ENCODE measurements at regions of chr15 and their contacts with region 1.

Region 1: GRCh38 chr15:48877630-48878595 is at the start of gene EID1:
- DNase-seq: peak; percentile 89
- H3K4me3 ChIP-seq: peak within 1 kb of the TSS; percentile 93
- CTCF ChIP-seq: no peak

Region 2: DNA sequence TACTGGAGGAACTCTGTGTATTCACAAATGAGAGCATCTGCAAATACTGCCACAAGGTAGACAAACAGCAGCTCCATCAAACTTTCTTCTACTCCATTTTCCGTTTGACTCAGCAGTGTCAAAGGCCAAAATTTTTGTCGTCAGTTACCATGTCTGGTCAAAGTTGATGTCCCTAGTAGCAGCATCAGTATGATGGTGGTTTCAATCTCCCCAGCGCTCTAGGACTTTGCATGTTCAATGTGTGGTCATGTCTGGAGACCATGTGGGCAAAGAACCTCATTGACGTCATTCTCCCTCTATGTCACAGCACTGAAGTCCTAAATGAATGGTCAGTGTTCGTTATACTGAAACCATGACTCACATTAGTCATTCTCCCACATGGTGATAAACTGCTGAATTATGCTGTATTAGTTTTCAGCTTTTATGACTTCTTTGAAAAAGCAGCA is 62.6 kb after region 1 on chr15:
- in situ Hi-C with region 1: loop called (anchors 5 kb)
- DNase-seq: peak; percentile 93
- H3K4me3 ChIP-seq: no peak overlapping the region
- CTCF ChIP-seq: no peak

Region 3: DNA sequence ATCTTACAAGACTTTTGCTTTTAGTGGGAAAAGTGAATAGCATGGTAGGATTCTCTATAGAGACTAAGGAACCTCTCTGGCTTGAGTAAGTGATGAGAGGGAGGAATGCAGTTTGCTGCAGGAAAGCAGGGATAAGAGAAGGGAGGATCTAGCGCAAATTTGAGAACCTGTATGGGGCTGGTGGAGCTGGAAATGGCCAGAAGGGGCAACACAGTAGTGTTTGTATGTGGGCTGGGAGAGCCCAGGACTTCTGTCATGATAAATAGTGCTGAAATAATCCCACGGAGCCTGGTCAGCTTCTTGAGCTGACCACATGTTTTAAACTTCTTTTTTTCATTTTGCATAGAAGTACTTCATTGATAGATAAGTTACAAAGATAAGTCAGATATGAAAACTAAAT is 97.0 kb after region 1 on chr15:
- in situ Hi-C with region 1: loop called (anchors 5 kb)
- DNase-seq: no peak
- H3K4me3 ChIP-seq: no peak overlapping the region
- CTCF ChIP-seq: peak; percentile 20

Region 4: GRCh38 chr15:49145651-49146609 is 268.0 kb after region 1 on chr15:
- in situ Hi-C with region 1: loop called (anchors 10 kb)
- DNase-seq: peak; percentile 63
- H3K4me3 ChIP-seq: no peak overlapping the region
- CTCF ChIP-seq: peak; percentile 72

Region 5: GRCh38 chr15:49255966-49256759 is 378.2 kb after region 1 on chr15:
- in situ Hi-C with region 1: no loop called
- DNase-seq: no peak
- H3K4me3 ChIP-seq: no peak overlapping the region
- CTCF ChIP-seq: no peak

Measured in astrocyte of the cerebellum (primary cell).